ENCODE measurements at regions of chr16 and their contacts with region 1.

Region 1: GRCh38 chr16:15765880-15766279 is 90.9 kb downstream of the MYH11 start:
- DNase-seq: peak; percentile 17 to 46
- ATAC-seq: peak; percentile 92
- H3K4me3 ChIP-seq: no peak overlapping the region
- H3K27ac ChIP-seq: no peak overlapping the region
- H3K4me1 ChIP-seq: no peaks in the 10 kb centered on the region
- H3K27me3 ChIP-seq: no peaks in the 10 kb centered on the region
- CTCF ChIP-seq: peak; percentile 48 to 85 (median 67)
- POLR2A ChIP-seq: no peak

Region 2: GRCh38 chr16:15749366-15749765 is 16.5 kb before region 1 on chr16:
- in situ Hi-C with region 1: no loop called
- intact Hi-C with region 1: no loop called
- DNase-seq: no peak
- ATAC-seq: no peak
- H3K4me3 ChIP-seq: no peak overlapping the region
- H3K27ac ChIP-seq: no peak overlapping the region
- H3K4me1 ChIP-seq: no peaks in the 10 kb centered on the region
- H3K27me3 ChIP-seq: no peaks in the 10 kb centered on the region
- CTCF ChIP-seq: no peak
- POLR2A ChIP-seq: no peak

Region 3: DNA sequence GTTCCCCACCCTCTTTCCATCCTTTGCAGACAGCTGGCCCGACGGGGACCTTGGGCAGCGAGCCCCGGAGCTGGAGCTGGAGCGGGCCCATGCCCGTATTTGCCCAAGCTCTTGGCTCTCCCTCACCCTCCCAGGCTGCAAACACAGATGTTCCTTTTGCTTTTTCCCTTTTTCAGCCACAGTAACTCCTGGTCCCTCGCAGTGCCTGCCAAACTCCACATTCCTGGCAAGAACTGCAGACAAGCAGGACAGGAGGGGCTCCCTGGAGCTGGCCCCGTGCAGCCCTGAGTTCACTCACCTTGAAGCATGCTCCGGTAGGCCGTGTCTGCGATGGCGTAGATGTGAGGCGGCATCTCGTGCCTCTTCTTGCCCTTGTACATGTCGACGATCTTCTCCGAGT is 57.1 kb after region 1 on chr16:
- in situ Hi-C with region 1: loop called in 1 of 4 experiments (anchors 5 kb)
- intact Hi-C with region 1: loop called (anchors 1 kb)
- DNase-seq: no peak
- ATAC-seq: no peak
- H3K4me3 ChIP-seq: no peak overlapping the region
- H3K27ac ChIP-seq: no peak overlapping the region
- H3K4me1 ChIP-seq: no peaks in the 10 kb centered on the region
- H3K27me3 ChIP-seq: no peaks in the 10 kb centered on the region
- CTCF ChIP-seq: no peak
- POLR2A ChIP-seq: no peak

Region 4: DNA sequence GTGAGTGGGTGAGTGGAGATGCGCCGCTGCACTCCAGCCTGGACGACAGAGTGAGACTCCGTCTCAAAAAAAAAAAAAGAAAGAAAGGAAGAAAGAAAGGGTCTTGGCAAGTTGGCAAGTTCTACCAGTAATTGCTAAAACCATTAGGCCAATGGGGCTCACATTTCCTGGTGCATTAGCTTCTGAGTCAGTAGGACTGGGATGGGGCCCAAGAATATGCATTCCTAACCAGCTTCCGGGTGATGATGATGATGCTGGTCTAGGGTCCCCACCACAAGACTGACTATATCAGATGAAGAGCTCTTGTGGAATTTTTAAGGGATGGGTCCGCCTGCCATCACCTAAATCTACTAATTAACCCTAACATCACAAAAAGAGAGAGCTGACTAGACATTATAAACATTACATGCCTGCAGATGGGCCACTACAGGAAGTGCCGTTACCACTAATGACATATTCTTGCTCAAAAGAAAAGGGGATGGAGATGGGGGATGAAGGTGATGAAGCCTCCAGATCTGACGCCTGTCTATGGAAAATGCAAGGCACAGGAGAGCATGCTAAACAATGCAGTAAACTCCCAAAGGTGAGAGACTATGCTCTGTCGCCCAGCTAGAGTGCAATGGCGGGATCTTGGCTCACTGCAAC is 77.9 kb after region 1 on chr16:
- in situ Hi-C with region 1: no loop called
- intact Hi-C with region 1: no loop called
- DNase-seq: no peak
- ATAC-seq: no peak
- H3K4me3 ChIP-seq: no peak overlapping the region
- H3K27ac ChIP-seq: no peak overlapping the region
- H3K4me1 ChIP-seq: no peaks in the 10 kb centered on the region
- H3K27me3 ChIP-seq: no peaks in the 10 kb centered on the region
- CTCF ChIP-seq: no peak
- POLR2A ChIP-seq: no peak

Region 5: DNA sequence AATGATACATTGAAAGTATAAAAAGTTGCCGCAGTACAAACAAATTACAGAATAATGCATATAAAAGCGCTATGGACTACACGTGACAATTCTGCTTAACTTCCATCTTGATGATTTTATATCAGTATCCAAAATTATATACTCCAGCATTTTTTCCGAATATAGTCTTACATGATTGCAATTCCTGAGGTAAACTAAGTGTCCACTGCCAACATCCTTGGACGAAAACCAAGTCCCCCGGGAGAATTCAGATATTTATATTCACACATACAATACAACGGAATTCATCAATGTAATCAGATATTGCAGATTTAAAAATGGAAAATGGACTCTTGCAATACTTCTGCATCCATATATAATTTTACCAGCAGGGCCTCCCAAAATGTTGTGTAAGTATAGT is 99.9 kb after region 1 on chr16:
- in situ Hi-C with region 1: no loop called
- intact Hi-C with region 1: no loop called
- DNase-seq: no peak
- ATAC-seq: no peak
- H3K4me3 ChIP-seq: no peak overlapping the region
- H3K27ac ChIP-seq: no peak overlapping the region
- H3K4me1 ChIP-seq: no peaks in the 10 kb centered on the region
- H3K27me3 ChIP-seq: no peaks in the 10 kb centered on the region
- CTCF ChIP-seq: no peak
- POLR2A ChIP-seq: no peak

Region 6: DNA sequence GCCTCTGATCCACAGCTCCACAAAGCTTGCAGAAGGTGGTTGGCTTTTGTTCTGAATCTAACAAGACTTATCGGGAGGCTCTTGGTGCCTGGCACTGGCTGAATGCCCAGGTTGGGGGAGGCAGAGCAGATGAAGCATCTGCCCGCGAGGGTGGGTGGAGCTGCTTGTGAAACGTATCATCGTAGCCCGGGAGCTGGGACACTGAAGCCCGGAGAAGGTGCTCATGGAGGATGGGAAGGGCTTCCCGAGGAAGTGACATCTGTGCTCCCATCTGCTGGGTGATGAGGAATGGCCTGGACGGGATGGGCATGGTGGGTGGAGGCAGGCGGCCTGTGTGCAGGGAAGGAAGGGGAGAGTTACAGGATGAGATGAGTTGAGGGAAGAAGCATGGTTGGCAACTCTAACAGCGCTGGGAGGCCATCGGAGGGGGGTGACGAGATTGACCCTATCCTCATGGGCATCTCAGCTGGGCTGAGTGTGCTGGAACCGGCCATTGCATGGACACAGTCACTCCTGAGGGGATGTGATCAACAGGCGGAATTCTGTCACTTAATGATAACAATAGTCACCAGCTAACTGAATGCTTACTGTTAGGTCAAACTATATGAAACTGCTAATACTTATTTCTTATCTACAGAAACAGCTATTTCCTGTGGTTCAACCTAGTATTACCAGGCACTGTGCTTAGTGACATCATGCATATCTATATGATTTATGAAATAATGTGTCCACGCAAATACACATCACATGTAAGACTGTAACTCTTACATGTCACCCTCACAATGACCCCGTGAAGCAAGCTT is 354.7 kb after region 1 on chr16:
- in situ Hi-C with region 1: loop called in 1 of 4 experiments (anchors 25 kb)
- intact Hi-C with region 1: loop called (anchors 10 kb)
- DNase-seq: no peak
- ATAC-seq: peak in 1 of 2 donors; percentile 14
- H3K4me3 ChIP-seq: no peak overlapping the region
- H3K27ac ChIP-seq: peak overlapping the region in 1 of 4 donors; percentile 13
- H3K4me1 ChIP-seq: no peaks in the 10 kb centered on the region
- H3K27me3 ChIP-seq: no peaks in the 10 kb centered on the region
- CTCF ChIP-seq: no peak
- POLR2A ChIP-seq: no peak

Region 7: GRCh38 chr16:16127469-16128116 is 361.7 kb after region 1 on chr16:
- in situ Hi-C with region 1: loop called in 1 of 4 experiments (anchors 25 kb)
- intact Hi-C with region 1: loop called (anchors 10 kb)
- DNase-seq: peak; percentile 40 to 66
- ATAC-seq: peak; percentile 75 to 91
- H3K4me3 ChIP-seq: no peak overlapping the region
- H3K27ac ChIP-seq: peak overlapping the region in 2 of 4 donors; percentile 44 to 53
- H3K4me1 ChIP-seq: no peaks in the 10 kb centered on the region
- H3K27me3 ChIP-seq: no peaks in the 10 kb centered on the region
- CTCF ChIP-seq: peak; percentile 85 to 93 (median 88)
- POLR2A ChIP-seq: no peak

Region 8: GRCh38 chr16:16191493-16192167 is 425.8 kb after region 1 on chr16:
- in situ Hi-C with region 1: no loop called
- intact Hi-C with region 1: loop called (anchors 2 kb)
- DNase-seq: no peak
- ATAC-seq: no peak
- H3K4me3 ChIP-seq: no peak overlapping the region
- H3K27ac ChIP-seq: no peak overlapping the region
- H3K4me1 ChIP-seq: peaks cover 6 to 12% of the 10 kb centered on the region in 2 donors
- H3K27me3 ChIP-seq: no peaks in the 10 kb centered on the region
- CTCF ChIP-seq: no peak
- POLR2A ChIP-seq: no peak